Common myeloid progenitor, CD34-positive (primary cell): ENCODE measurements at regions of chr3 and their contacts with region 1.

Region 1: GRCh38 chr3:54374214-54374855 is 252.0 kb downstream of the CACNA2D3 start:
- DNase-seq: peak; percentile 52 to 79 (median 74)
- H3K4me3 ChIP-seq: no peak overlapping the region
- H3K27ac ChIP-seq: no peak overlapping the region
- H3K4me1 ChIP-seq: peaks cover 0 to 11% (median 6%) of the 10 kb centered on the region in 4 experiments
- H3K27me3 ChIP-seq: peaks cover 0 to 23% (median 3%) of the 10 kb centered on the region in 5 experiments

Region 2: GRCh38 chr3:53938645-53939044 is 435.7 kb before region 1 on chr3:
- CTCF ChIA-PET with region 1: interaction called, 26 read pairs
- POLR2A ChIA-PET with region 1: no interaction called
- DNase-seq: peak; percentile 33 to 65 (median 60)
- H3K4me3 ChIP-seq: no peak overlapping the region
- H3K27ac ChIP-seq: no peak overlapping the region
- H3K4me1 ChIP-seq: no peaks in the 10 kb centered on the region
- H3K27me3 ChIP-seq: peaks cover 0 to 27% (median 6%) of the 10 kb centered on the region in 5 experiments

Region 3: DNA sequence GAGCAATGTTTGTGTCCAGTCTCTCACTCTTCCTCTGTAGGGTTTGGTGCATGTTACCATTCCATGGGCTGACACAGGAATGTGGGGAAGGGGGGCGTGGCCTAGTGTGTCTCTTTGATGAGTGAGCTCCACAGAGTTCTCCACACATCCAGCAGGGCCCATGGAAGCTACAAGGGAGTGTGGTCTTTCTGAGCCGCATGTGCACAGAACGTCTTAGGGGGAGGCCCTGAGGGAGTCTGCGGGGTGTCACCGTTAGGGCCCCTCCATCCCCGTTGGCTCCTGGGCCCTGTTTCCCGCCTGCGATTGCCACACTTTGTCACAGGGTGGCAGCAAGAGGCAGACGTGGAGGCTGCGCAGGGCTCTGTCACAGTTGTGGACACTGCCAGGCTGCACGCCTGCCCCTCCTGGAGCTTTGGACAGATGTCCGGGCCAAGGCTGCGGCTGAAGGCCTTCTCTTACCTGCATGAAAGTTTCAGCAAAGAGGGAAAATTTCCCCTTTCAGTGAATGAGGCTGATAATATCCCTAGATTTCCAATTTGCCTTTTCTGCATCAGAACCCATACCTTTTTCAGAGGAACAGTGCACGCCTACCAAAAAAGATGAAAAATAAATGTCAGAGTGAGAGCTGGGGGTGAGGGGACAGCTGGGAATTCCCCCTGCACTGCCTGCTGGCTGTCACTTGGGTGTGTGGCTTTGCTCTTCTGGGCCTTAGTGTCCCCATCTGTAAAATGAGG is 227.7 kb before region 1 on chr3:
- CTCF ChIA-PET with region 1: interaction called, 53 read pairs
- POLR2A ChIA-PET with region 1: no interaction called
- DNase-seq: peak; percentile 15 to 44 (median 40)
- H3K4me3 ChIP-seq: no peak overlapping the region
- H3K27ac ChIP-seq: no peak overlapping the region
- H3K4me1 ChIP-seq: no peaks in the 10 kb centered on the region
- H3K27me3 ChIP-seq: peaks cover 0 to 47% (median 5%) of the 10 kb centered on the region in 5 experiments

Region 4: GRCh38 chr3:54506603-54507002 is 132.3 kb after region 1 on chr3:
- CTCF ChIA-PET with region 1: no interaction called
- POLR2A ChIA-PET with region 1: no interaction called
- DNase-seq: no peak
- H3K4me3 ChIP-seq: no peak overlapping the region
- H3K27ac ChIP-seq: no peak overlapping the region
- H3K4me1 ChIP-seq: no peaks in the 10 kb centered on the region
- H3K27me3 ChIP-seq: no peaks in the 10 kb centered on the region